MCF 10A (cell line): ENCODE measurements at regions of chr3 and their contacts with region 1.

Region 1: GRCh38 chr3:58305882-58306711 is at the starts of genes HTD2 and RPP14:
- DNase-seq: peak; percentile 97
- H3K4me3 Mint-ChIP-seq: peak within 1 kb of the TSS; percentile 96
- H3K27ac Mint-ChIP-seq: peak within 1 kb of the TSS; percentile 99
- H3K4me1 Mint-ChIP-seq: no peaks in the 10 kb centered on the region
- H3K27me3 Mint-ChIP-seq: peaks cover 8% of the 10 kb centered on the region
- CTCF ChIP-seq: peak; percentile 66
- total RNA-seq, gene HTD2: 10.1 and 11.5 TPM in 2 replicates
- total RNA-seq, gene RPP14: 19.0 and 20.0 TPM in 2 replicates

Region 2: DNA sequence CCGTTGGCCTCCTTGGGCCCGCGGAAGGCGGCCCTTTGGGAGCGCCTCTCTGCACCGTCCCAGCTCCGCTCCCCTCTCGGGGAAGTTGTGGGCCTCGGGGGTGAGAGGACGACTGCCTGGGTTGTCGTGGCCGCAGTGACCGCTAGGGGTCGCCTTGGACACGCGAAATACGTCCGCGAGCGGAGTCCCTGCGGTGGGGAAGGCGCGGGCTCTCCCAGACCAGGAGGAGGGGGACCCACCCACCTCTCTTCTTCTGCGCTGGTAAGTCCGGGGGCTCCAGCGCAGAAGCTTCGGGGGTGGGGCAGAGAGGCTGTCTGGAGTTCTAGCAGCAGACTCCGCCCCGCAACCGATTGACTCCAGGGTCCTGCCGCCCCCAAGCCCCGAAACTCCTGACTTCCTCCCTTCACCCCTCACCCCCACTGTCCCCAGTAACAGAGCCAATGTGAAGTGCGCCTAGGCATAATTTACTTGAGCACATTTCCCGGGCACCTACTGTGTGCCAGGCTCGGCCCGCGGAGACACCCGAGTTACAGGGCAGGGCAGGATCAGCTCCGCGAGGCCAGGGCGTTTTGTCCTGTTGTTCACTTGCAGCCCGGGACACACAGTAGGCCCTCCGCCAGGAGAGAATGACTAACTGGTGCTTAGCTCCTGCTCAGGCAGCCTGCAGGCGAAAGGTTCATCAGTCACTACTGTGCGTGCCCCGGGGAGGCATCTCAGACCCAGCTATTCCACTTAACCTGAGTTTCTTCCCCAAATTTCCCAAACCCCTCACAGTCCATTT is 128.2 kb before region 1 on chr3:
- CTCF ChIA-PET with region 1: interaction called, 254 read pairs
- POLR2A ChIA-PET with region 1: interaction called, 8 read pairs
- intact Hi-C with region 1: no loop called
- DNase-seq: peak; percentile 78
- H3K4me3 Mint-ChIP-seq: peak overlapping the region; percentile 51
- H3K27ac Mint-ChIP-seq: no peak overlapping the region
- H3K4me1 Mint-ChIP-seq: peaks cover 24% of the 10 kb centered on the region
- H3K27me3 Mint-ChIP-seq: no peaks in the 10 kb centered on the region
- CTCF ChIP-seq: peak; percentile 82

Region 3: DNA sequence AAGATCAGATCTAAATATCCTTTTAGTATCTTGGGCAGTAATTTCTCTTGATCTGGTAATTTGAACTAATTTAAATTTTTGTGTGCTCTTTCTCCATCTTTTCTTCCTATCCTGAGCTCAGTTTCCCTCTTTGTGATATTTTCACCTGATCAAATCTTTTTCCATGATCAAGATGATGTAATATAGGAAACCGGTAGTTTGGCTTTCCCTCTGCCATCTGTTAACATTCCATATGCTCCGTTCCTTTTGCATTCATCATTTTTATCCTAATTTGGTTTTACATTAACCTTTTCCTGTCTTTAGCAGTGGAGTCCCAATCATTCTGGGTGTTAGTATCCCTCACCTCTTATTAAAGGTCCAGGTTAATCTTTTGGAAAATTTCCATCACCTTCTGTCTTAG is 74.4 kb before region 1 on chr3:
- CTCF ChIA-PET with region 1: interaction called, 11 read pairs
- POLR2A ChIA-PET with region 1: interaction called, 12 read pairs
- intact Hi-C with region 1: no loop called
- DNase-seq: no peak
- H3K4me3 Mint-ChIP-seq: no peak overlapping the region
- H3K27ac Mint-ChIP-seq: no peak overlapping the region
- H3K4me1 Mint-ChIP-seq: peaks cover 7% of the 10 kb centered on the region
- H3K27me3 Mint-ChIP-seq: peaks cover 47% of the 10 kb centered on the region
- CTCF ChIP-seq: no peak

Region 4: GRCh38 chr3:58293516-58293915 is 12.6 kb before region 1 on chr3:
- CTCF ChIA-PET with region 1: interaction called, 10 read pairs
- POLR2A ChIA-PET with region 1: interaction called, 3 read pairs
- intact Hi-C with region 1: no loop called
- DNase-seq: no peak
- H3K4me3 Mint-ChIP-seq: no peak overlapping the region
- H3K27ac Mint-ChIP-seq: no peak overlapping the region
- H3K4me1 Mint-ChIP-seq: no peaks in the 10 kb centered on the region
- H3K27me3 Mint-ChIP-seq: no peaks in the 10 kb centered on the region
- CTCF ChIP-seq: no peak

Region 5: DNA sequence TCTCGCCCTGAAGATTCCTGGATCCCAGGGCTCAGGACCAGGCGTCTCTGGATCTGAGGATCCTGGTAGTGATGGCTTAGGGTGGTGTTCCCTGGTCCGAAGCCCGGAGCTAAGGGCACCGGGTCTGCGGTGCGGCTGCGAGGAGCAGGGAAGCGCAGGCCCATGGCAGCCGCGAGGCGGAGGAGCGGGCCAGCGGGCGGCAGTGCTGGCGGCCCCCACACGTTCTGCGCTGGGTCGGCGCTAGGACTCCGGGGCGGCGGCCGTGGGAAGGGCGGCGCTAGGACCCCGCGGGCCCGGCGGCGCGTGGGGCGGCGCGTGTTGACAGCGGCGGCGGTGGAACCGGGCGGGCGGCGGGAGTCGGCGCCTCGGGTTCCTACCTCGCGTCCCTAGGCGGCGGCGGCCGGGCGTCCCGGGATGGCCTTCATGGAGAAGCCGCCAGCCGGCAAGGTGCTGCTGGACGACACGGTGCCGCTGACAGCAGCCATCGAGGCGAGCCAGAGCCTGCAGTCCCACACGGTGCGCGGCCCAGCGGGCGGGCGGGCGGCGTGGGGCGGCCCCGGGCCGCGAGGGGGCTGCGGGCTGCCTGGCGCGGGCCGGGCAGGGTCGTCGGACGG is 26.6 kb after region 1 on chr3 and contains the start of gene PXK:
- CTCF ChIA-PET with region 1: interaction called, 34 read pairs
- POLR2A ChIA-PET with region 1: interaction called, 54 read pairs
- intact Hi-C with region 1: no loop called
- DNase-seq: peak; percentile 71
- H3K4me3 Mint-ChIP-seq: peak within 1 kb of the TSS; percentile 78
- H3K27ac Mint-ChIP-seq: peak within 1 kb of the TSS; percentile 93
- H3K4me1 Mint-ChIP-seq: peaks cover 22% of the 10 kb centered on the region
- H3K27me3 Mint-ChIP-seq: no peaks in the 10 kb centered on the region
- CTCF ChIP-seq: no peak
- total RNA-seq, gene PXK: 55.1 and 62.2 TPM in 2 replicates

Region 6: DNA sequence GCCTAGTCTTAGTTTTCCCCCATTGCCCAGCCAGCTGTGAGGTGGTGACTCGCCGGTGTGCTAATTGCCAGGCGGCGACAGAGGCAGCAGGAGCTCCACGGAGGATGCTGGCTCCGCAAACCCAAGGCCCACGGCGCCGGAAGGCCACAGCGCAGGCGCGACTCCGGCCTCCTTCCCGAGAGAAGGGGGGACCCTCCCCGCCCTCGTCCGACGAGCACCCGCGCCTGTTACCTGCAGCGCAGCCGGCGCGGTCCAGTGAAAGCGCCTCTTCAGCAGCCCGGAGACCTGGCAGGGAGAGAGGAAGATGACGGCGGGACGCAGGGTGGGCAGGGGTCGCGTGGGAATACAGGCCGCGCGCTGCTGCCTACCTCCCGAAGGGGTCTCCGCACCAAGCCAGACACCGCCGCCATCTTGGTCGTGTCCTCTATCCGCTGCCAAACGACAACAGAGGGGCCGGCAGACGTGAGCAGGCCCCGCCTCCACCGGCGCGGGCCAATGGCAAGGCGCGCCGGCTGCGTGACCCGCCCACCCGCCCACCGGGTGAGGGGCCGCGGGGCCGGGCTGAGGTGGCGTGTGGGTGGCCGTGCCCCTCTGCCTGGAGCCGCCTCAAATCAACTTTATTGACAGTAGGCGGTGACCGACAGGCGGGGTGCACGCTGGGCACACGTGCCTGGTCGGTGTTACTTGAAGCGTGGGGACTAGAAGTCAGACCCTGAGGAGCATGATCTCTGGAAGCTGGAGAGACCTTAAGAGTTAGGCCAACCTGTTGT is 127.5 kb after region 1 on chr3 and contains the start of gene PDHB:
- CTCF ChIA-PET with region 1: interaction called, 4 read pairs
- POLR2A ChIA-PET with region 1: interaction called, 10 read pairs
- intact Hi-C with region 1: no loop called
- DNase-seq: peak; percentile 87
- H3K4me3 Mint-ChIP-seq: peak within 1 kb of the TSS; percentile 93
- H3K27ac Mint-ChIP-seq: peak within 1 kb of the TSS; percentile 40
- H3K4me1 Mint-ChIP-seq: peaks cover 21% of the 10 kb centered on the region
- H3K27me3 Mint-ChIP-seq: no peaks in the 10 kb centered on the region
- CTCF ChIP-seq: no peak
- total RNA-seq, gene PDHB: 52.2 and 62.2 TPM in 2 replicates

Region 7: DNA sequence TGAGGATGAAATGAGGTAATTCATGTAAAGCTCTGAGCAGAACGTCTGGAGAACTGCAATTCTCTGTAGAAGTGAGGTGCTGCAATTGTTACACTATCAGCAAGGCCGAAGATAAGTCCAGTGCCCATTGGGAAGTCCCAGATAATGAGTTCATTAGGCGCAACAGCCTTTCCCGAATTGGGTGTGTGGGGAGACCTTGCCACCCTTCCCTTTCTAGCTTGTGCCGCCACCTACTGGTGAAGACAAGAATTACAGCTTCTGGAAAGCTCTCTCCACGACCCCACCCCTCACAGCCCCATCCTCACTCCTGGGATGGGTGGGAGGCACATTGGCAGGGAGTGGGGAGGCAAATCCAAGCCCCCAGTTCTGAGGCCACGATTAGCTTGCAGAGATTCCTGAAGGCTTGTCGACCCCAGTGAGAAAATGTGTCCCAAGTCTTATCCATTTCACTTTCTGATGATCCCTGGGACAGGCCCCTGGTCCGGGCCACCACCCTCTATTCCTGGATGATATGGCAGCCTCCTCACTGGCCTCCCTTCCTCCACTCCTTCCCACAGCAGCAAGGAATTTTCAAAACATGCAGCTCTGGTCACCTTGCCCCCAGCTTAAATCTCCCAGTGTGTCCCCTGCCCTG is 324.1 kb after region 1 on chr3:
- CTCF ChIA-PET with region 1: interaction called, 11 read pairs
- POLR2A ChIA-PET with region 1: interaction called, 4 read pairs
- intact Hi-C with region 1: loop called (anchors 2 kb)
- DNase-seq: peak; percentile 75
- H3K4me3 Mint-ChIP-seq: no peak overlapping the region
- H3K27ac Mint-ChIP-seq: no peak overlapping the region
- H3K4me1 Mint-ChIP-seq: peaks cover 5% of the 10 kb centered on the region
- H3K27me3 Mint-ChIP-seq: no peaks in the 10 kb centered on the region
- CTCF ChIP-seq: peak; percentile 94

Region 8: DNA sequence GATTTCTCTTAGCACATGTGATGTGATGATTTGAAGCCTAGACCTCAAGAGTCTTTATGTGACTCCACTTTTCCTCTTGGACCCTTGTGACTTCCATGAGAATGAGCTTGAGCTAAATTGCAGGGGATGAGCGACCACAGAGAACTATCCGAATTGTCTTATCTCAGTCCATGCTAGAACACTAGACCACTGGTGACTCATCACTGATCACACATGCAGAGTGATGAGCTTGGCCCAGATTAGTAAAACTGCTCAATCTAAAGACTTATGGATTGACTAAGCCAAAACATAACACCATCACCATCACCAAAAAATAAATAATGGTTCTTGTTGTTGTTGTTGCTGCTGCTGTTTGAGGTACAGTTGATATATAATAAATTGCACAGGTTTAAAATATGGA is 857.9 kb after region 1 on chr3:
- CTCF ChIA-PET with region 1: no interaction called
- POLR2A ChIA-PET with region 1: no interaction called
- intact Hi-C with region 1: no loop called
- DNase-seq: no peak
- H3K4me3 Mint-ChIP-seq: no peak overlapping the region
- H3K27ac Mint-ChIP-seq: no peak overlapping the region
- H3K4me1 Mint-ChIP-seq: no peaks in the 10 kb centered on the region
- H3K27me3 Mint-ChIP-seq: no peaks in the 10 kb centered on the region
- CTCF ChIP-seq: no peak